ENCODE measurements at regions of chr14 and their contacts with region 1.

Region 1: GRCh38 chr14:24692382-24693352 is 58.7 kb upstream of the GZMB start:
- DNase-seq: peak in 17 of 35 experiments; percentile 20 to 85 (median 36)
- ATAC-seq: peak; percentile 84 to 94 (median 90)
- H3K4me3 ChIP-seq: peak overlapping the region; percentile 3 to 35
- H3K4me3 Mint-ChIP-seq: peak overlapping the region; percentile 2 to 65 (median 25)
- H3K27ac ChIP-seq: peak overlapping the region; percentile 58
- H3K27ac Mint-ChIP-seq: peak overlapping the region; percentile 56 to 84
- H3K4me1 ChIP-seq: peaks cover 15 to 64% of the 10 kb centered on the region in 2 experiments
- H3K4me1 Mint-ChIP-seq: peaks cover 2 to 22% (median 14%) of the 10 kb centered on the region in 3 donors
- H3K27me3 ChIP-seq: no peaks in the 10 kb centered on the region
- H3K27me3 Mint-ChIP-seq: peaks cover 0 to 10% of the 10 kb centered on the region in 2 donors

Region 2: DNA sequence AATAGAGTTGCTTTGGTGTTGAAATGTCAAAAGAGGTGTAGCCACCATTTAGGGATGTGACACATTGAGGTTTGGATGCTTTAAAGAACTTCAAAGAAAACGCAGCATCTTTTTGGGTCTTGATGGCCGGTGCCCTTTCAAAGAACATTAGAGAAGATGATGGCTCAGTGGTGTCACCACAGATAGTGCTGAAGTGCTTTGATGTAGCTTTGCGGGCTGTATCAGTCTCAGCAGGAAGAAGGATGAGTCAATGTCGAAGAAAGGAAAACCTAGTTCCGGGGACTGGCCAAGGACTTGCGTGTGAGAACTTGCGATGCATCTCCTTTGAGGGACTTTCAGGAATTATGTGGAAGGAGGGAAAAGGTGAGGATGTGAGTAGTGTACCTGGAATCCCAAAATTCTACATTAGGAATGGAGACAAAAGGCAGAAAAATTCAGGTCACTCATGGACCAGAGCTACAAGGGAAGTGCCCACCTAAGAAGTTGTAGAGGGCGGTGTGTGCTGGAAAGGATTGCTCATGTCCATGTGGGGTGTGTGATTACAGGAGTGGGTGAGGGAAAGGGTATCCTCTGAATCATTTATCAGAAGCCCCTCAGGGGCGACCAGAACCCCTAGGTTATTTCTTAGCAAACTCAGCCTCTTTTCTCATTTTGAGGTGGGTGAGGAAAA is 19.0 kb before region 1 on chr14:
- CTCF ChIA-PET with region 1: interaction called, 3 to 12 read pairs
- POLR2A ChIA-PET with region 1: interaction called in 1 of 2 experiments, 4 read pairs
- DNase-seq: peak in 33 of 35 experiments; percentile 11 to 87 (median 49)
- ATAC-seq: peak; percentile 84 to 89 (median 87)
- H3K4me3 ChIP-seq: peak overlapping the region; percentile 28 to 53
- H3K4me3 Mint-ChIP-seq: peak overlapping the region; percentile 74 to 78 (median 77)
- H3K27ac ChIP-seq: peak overlapping the region; percentile 82
- H3K27ac Mint-ChIP-seq: peak overlapping the region; percentile 94 to 97
- H3K4me1 ChIP-seq: peaks cover 29 to 34% of the 10 kb centered on the region in 2 experiments
- H3K4me1 Mint-ChIP-seq: peaks cover 47 to 61% (median 55%) of the 10 kb centered on the region in 3 donors
- H3K27me3 ChIP-seq: no peaks in the 10 kb centered on the region
- H3K27me3 Mint-ChIP-seq: no peaks in the 10 kb centered on the region

Measured in T-cell (primary cell).